ENCODE measurements at regions of chr19 and their contacts with region 1.

Region 1: GRCh38 chr19:1812469-1813196 is 557 bp upstream of the ATP8B3 start:
- DNase-seq: peak; percentile 94
- H3K4me3 Mint-ChIP-seq: peak overlapping the region; percentile 92
- H3K27ac Mint-ChIP-seq: peak overlapping the region; percentile 88
- H3K4me1 Mint-ChIP-seq: peaks cover 13% of the 10 kb centered on the region
- H3K27me3 Mint-ChIP-seq: no peaks in the 10 kb centered on the region

Region 2: GRCh38 chr19:1490311-1491113 is 322.1 kb before region 1 on chr19 and contains the start of gene PCSK4:
- CTCF ChIA-PET with region 1: no interaction called
- intact Hi-C with region 1: loop called (anchors 1 kb)
- DNase-seq: peak; percentile 99
- H3K4me3 Mint-ChIP-seq: peak within 1 kb of the TSS; percentile 81
- H3K27ac Mint-ChIP-seq: peak within 1 kb of the TSS; percentile 57
- H3K4me1 Mint-ChIP-seq: peaks cover 15% of the 10 kb centered on the region
- H3K27me3 Mint-ChIP-seq: peaks cover 4% of the 10 kb centered on the region
- total RNA-seq, gene PCSK4: 1.5 to 1.7 TPM

Region 3: GRCh38 chr19:1774999-1775772 is 37.4 kb before region 1 on chr19:
- CTCF ChIA-PET with region 1: no interaction called
- intact Hi-C with region 1: loop called (anchors 5 kb)
- DNase-seq: no peak
- H3K4me3 Mint-ChIP-seq: no peak overlapping the region
- H3K27ac Mint-ChIP-seq: no peak overlapping the region
- H3K4me1 Mint-ChIP-seq: no peaks in the 10 kb centered on the region
- H3K27me3 Mint-ChIP-seq: peaks cover 69% of the 10 kb centered on the region

Region 4: DNA sequence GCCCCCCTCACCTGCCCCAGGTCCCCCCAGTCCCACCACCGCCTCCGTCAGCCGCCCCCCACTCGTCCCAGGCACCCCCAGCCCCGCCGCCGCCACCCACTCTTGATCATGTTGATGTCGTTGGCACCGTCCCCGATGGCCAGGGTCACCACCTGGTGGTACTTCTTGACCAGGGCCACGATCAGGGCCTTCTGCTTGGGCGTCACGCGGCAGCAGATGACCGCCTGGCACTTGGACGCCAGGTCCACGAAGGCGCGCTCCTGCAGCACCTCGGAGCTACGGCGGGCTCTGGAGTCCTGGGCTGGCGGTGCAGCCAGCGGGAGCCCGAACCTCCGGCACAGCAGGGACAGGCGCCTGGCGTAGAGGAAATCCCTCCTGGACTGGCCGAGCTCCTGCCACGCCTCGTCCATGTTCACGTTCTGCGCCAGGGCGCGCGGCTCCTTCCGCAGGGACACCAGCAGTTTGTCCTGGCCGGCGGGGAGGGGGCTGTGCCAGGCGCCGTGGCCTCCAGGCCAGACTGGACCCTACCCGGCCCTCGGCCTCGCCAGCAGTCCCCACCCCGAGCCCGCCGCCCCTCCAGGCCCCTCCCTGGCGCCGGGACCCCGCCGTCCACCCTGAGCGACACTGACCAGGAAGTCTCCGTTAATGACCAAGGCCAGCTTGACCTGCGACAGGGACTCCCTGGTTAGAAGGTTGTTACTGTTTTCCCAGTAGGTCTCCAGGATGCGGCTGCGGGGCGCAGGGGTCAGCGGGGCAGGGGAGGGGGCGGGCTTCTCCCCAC is 23.2 kb before region 1 on chr19:
- CTCF ChIA-PET with region 1: interaction called, 7 read pairs
- intact Hi-C with region 1: loop called (anchors 2 kb)
- DNase-seq: no peak
- H3K4me3 Mint-ChIP-seq: no peak overlapping the region
- H3K27ac Mint-ChIP-seq: no peak overlapping the region
- H3K4me1 Mint-ChIP-seq: no peaks in the 10 kb centered on the region
- H3K27me3 Mint-ChIP-seq: peaks cover 14% of the 10 kb centered on the region

Region 5: GRCh38 chr19:1848399-1849131 is 35.9 kb after region 1 on chr19 and contains the start of gene REXO1:
- CTCF ChIA-PET with region 1: no interaction called
- intact Hi-C with region 1: loop called (anchors 1 kb)
- DNase-seq: peak; percentile 99
- H3K4me3 Mint-ChIP-seq: peak within 1 kb of the TSS; percentile 86
- H3K27ac Mint-ChIP-seq: peak within 1 kb of the TSS; percentile 89
- H3K4me1 Mint-ChIP-seq: peaks cover 66% of the 10 kb centered on the region
- H3K27me3 Mint-ChIP-seq: no peaks in the 10 kb centered on the region
- total RNA-seq, gene REXO1: 39.8 to 47.6 TPM

Measured in activated naive CD4-positive, alpha-beta T cell treated with anti-CD3 and anti-CD28 coated beads for 36 hours (primary cell).